Activated B cell treated with CpG ODN at 0.5 μM for 24 hours (primary cell): ENCODE measurements at regions of chr3 and their contacts with region 1.

Region 1: GRCh38 chr3:187139126-187139894 is at the start of gene RPL39L:
- DNase-seq: peak; percentile 95
- ATAC-seq: peak; percentile 95
- H3K4me3 Mint-ChIP-seq: peak within 1 kb of the TSS; percentile 90
- H3K27ac Mint-ChIP-seq: peak within 1 kb of the TSS; percentile 95
- H3K4me1 Mint-ChIP-seq: peaks cover 19% of the 10 kb centered on the region
- H3K27me3 Mint-ChIP-seq: no peaks in the 10 kb centered on the region
- CTCF ChIP-seq: no peak
- total RNA-seq, gene RPL39L: 4.7 and 6.9 TPM in 2 replicates

Region 2: DNA sequence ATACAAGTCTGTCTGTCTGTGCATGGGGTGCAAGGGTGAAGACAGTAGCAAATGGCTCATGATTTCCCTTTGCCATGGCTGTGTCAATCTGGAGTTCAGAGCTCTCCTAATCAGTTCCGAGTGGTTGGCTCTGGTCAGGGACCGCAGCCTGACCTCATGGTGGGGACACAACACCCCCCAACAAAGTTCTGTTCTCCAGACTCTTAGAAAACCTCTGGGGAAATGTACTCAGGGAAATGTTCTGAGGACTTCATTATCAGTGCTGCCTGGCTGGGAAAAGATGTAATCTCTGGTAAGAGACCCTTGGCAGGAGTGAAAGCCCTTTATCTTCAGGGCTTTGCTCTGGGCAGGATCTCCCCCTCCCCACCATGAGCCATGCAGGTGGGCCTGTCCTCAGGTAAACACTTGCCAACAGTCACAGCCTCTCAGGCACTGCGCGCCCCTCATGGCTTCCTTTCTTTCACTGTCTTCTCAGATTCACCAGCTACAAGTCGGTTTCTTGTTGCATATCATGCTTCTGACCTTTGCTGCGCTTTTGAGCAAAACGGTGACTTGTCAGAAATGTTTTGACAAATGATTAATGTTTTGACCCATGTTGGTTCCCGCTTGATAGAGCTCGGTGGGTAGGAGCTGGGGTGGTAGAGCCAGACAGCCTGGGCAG is 113.5 kb before region 1 on chr3:
- CTCF ChIA-PET with region 1: interaction called, 3 read pairs
- POLR2A ChIA-PET with region 1: interaction called, 5 read pairs
- intact Hi-C with region 1: loop called (anchors 10 kb)
- DNase-seq: no peak
- ATAC-seq: peak; percentile 51
- H3K4me3 Mint-ChIP-seq: peak overlapping the region; percentile 84
- H3K27ac Mint-ChIP-seq: peak overlapping the region; percentile 93
- H3K4me1 Mint-ChIP-seq: peaks cover 93% of the 10 kb centered on the region
- H3K27me3 Mint-ChIP-seq: no peaks in the 10 kb centered on the region
- CTCF ChIP-seq: no peak

Region 3: DNA sequence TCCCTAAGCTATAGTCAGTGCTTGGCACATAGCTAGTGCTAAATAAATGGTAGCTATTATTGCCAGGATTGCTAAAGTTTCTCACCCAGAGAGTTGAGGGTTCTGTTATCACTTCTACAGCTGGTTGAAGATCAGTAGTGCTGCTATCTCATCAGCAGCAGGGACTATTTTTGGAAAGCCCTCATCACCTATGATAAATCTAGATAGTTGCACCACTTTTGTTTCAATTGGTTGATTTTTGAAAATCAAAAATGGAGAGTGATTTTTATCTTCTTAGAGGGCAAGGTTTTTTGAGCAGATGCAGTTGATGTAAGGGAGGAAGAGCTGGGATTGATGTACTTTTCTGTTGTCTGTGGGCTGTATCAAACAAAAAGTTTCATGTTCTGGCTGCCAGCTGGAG is 107.4 kb before region 1 on chr3:
- CTCF ChIA-PET with region 1: interaction called, 4 read pairs
- POLR2A ChIA-PET with region 1: interaction called, 11 read pairs
- intact Hi-C with region 1: loop called (anchors 10 kb)
- DNase-seq: no peak
- ATAC-seq: no peak
- H3K4me3 Mint-ChIP-seq: peak overlapping the region; percentile 69
- H3K27ac Mint-ChIP-seq: peak overlapping the region; percentile 86
- H3K4me1 Mint-ChIP-seq: peaks cover 90% of the 10 kb centered on the region
- H3K27me3 Mint-ChIP-seq: no peaks in the 10 kb centered on the region
- CTCF ChIP-seq: no peak

Region 4: DNA sequence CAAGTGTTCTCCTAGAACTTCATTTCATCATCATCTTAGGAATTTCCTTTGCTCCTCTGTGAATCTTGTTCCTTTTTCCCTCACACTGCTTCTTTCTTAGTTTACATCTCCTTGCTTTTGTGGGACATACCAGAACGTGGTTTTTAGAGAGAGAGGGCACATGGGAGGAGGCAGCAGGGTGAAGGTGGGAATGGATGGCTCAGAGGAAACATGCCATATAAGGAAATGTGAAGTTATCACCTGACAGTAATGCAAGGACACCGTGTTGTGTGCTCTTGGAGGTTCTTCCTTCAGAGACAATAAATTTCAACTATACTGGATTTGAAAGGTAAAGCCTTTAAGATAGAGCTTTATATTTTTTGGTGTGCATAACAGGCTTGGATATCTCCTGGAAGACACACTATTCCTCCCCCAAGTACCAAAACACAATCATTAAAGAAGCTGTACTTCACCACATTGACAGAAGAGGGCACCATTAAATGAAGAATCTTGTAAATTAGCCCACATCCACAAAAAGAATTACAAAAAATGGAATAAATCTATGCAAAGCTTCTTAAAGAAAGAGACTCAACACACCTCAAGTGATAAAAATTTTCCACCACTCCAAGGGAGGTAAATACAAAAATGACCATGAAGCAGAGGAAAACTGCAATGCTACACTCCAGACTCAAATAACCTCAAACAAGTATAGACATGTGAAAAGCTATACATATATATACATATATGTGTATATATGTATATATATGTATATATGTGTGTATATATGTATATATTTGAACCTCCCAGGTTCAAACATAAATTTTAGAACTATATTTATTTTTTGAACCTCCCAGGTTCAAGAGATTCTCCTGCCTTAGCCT is 26.1 kb before region 1 on chr3:
- CTCF ChIA-PET with region 1: interaction called, 60 read pairs
- POLR2A ChIA-PET with region 1: interaction called, 28 read pairs
- intact Hi-C with region 1: loop called (anchors 1 kb)
- DNase-seq: no peak
- ATAC-seq: peak; percentile 49
- H3K4me3 Mint-ChIP-seq: no peak overlapping the region
- H3K27ac Mint-ChIP-seq: no peak overlapping the region
- H3K4me1 Mint-ChIP-seq: peaks cover 9% of the 10 kb centered on the region
- H3K27me3 Mint-ChIP-seq: no peaks in the 10 kb centered on the region
- CTCF ChIP-seq: no peak

Region 5: GRCh38 chr3:187125319-187126031 is 13.8 kb before region 1 on chr3:
- CTCF ChIA-PET with region 1: interaction called, 17 read pairs
- POLR2A ChIA-PET with region 1: interaction called, 24 read pairs
- intact Hi-C with region 1: loop called (anchors 1 kb)
- DNase-seq: no peak
- ATAC-seq: peak; percentile 68
- H3K4me3 Mint-ChIP-seq: no peak overlapping the region
- H3K27ac Mint-ChIP-seq: peak overlapping the region; percentile 54
- H3K4me1 Mint-ChIP-seq: peaks cover 29% of the 10 kb centered on the region
- H3K27me3 Mint-ChIP-seq: no peaks in the 10 kb centered on the region
- CTCF ChIP-seq: no peak

Region 6: GRCh38 chr3:187150599-187150998 is 11.3 kb after region 1 on chr3:
- CTCF ChIA-PET with region 1: interaction called, 43 read pairs
- POLR2A ChIA-PET with region 1: interaction called, 6 read pairs
- intact Hi-C with region 1: loop called (anchors 1 kb)
- DNase-seq: peak; percentile 54
- ATAC-seq: peak; percentile 66
- H3K4me3 Mint-ChIP-seq: no peak overlapping the region
- H3K27ac Mint-ChIP-seq: no peak overlapping the region
- H3K4me1 Mint-ChIP-seq: no peaks in the 10 kb centered on the region
- H3K27me3 Mint-ChIP-seq: peaks cover 5% of the 10 kb centered on the region
- CTCF ChIP-seq: no peak

Region 7: GRCh38 chr3:187164885-187165543 is 25.7 kb after region 1 on chr3:
- CTCF ChIA-PET with region 1: interaction called, 27 read pairs
- POLR2A ChIA-PET with region 1: interaction called, 7 read pairs
- intact Hi-C with region 1: loop called (anchors 1 kb)
- DNase-seq: no peak
- ATAC-seq: peak; percentile 73
- H3K4me3 Mint-ChIP-seq: no peak overlapping the region
- H3K27ac Mint-ChIP-seq: no peak overlapping the region
- H3K4me1 Mint-ChIP-seq: no peaks in the 10 kb centered on the region
- H3K27me3 Mint-ChIP-seq: peaks cover 14% of the 10 kb centered on the region
- CTCF ChIP-seq: no peak